ENCODE measurements at regions of chr6 and their contacts with region 1.

Region 1: GRCh38 chr6:149565527-149566409 is at the start of gene GINM1:
- DNase-seq: peak; percentile 91 to 96
- H3K4me3 ChIP-seq: peak within 1 kb of the TSS; percentile 89 to 96
- H3K27ac ChIP-seq: peak within 1 kb of the TSS; percentile 92 to 97
- H3K4me1 ChIP-seq: peaks cover 0 to 23% (median 12%) of the 10 kb centered on the region in 4 donors
- H3K27me3 ChIP-seq: no peaks in the 10 kb centered on the region
- CTCF ChIP-seq: peak; percentile 43 to 47

Region 2: DNA sequence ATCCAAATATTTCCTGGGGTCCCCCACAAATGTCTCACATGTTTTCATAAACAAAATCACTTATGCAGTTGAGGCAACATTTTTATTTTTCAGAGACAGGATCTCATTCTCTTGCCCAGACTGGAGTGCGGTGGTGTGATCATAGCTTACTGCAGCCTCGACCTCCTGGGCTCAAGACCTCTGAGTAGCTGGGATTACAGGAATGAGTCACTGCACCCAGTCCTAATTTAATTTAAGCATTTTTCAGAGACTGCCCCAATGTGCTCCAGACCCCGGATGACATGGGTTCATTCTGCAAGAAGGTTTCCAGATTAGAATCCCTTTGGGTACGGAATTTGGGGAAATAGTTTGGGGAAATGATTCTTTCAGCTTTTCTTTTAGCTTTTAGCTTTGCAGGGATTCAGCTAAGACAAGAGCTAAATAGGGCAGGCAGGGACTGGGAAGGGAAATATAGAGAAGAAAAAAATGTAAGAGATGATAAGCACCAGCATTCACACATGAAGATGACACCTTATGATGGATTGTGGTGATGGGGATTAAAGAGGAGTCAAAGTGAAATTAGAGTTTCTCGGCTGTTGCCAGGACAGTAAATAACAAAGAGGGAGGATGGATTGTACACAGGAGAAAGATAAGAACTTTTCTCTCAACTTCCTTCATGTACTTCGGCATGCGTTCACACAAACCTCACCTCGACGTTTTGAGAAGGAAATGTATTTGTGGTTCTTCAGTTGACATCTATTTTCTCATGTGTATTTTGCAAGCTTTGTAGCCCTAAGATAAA is 417.6 kb before region 1 on chr6:
- intact Hi-C with region 1: no loop called
- DNase-seq: no peak
- H3K4me3 ChIP-seq: no peak overlapping the region
- H3K27ac ChIP-seq: no peak overlapping the region
- H3K4me1 ChIP-seq: no peaks in the 10 kb centered on the region
- H3K27me3 ChIP-seq: no peaks in the 10 kb centered on the region
- CTCF ChIP-seq: no peak

Region 3: GRCh38 chr6:149545754-149546528 is 19.8 kb before region 1 on chr6 and contains the start of gene PPIL4:
- intact Hi-C with region 1: loop called (anchors 2 kb)
- DNase-seq: peak; percentile 95 to 98
- H3K4me3 ChIP-seq: peak within 1 kb of the TSS; percentile 89 to 95
- H3K27ac ChIP-seq: peak within 1 kb of the TSS; percentile 98 to 99
- H3K4me1 ChIP-seq: peaks cover 0 to 37% (median 18%) of the 10 kb centered on the region in 4 donors
- H3K27me3 ChIP-seq: no peaks in the 10 kb centered on the region
- CTCF ChIP-seq: peak; percentile 69 to 75

Region 4: DNA sequence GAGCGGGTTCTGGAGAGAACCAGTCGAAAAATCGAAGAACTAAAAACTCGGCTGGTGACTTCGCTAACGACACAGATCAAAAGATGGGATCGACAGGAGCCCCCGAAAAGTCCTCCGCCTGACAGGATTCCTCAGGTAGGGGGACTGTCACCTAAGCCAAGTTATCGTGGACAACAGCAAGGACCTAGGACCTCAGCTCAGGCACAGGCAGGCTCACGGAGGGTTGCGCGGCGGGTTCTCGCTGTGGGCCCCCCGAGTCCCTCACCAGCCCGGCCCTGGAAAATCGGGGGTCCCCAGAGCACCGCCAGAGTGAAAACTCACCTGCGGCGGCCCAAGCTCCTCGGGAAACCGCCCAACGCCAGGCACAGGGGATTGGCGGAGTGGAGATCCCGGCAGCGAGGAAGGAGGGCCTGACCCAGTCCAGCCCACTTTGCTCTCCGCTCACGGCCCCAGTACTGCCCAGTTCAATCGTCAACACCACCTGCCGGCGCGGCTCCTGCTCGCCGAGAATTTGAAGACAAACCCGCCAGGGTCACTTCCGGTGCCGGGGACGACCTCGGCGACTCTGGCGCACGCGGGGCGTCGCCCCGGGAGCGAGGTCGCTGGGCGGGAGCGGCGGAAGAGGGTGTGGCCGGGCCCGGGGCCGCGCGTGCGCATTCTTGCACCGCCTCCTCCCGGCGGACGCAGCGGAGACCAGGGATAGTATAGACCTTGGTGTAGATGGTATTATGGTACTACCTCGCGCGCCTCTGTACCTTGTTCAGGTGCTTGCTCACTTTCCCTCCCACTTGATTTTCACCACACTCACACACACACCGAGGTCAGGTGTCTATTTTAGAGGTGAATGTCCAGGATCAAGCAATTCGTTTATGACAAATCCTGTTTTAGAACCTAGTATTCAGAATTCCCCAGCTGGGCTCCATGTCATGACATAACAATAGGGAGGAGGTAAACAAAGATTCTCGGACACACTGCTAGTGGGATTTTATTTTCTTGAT is 82.7 kb after region 1 on chr6 and contains the start of gene KATNA1:
- intact Hi-C with region 1: loop called (anchors 10 kb)
- DNase-seq: peak; percentile 66 to 89
- H3K4me3 ChIP-seq: peak within 1 kb of the TSS; percentile 89 to 92
- H3K27ac ChIP-seq: peak within 1 kb of the TSS; percentile 83 to 86
- H3K4me1 ChIP-seq: peaks cover 0 to 15% (median 5%) of the 10 kb centered on the region in 4 donors
- H3K27me3 ChIP-seq: no peaks in the 10 kb centered on the region
- CTCF ChIP-seq: no peak

Measured in tibial artery (tissue), 4 donors.